ENCODE measurements at regions of chr17 and their contacts with region 1.

Region 1: DNA sequence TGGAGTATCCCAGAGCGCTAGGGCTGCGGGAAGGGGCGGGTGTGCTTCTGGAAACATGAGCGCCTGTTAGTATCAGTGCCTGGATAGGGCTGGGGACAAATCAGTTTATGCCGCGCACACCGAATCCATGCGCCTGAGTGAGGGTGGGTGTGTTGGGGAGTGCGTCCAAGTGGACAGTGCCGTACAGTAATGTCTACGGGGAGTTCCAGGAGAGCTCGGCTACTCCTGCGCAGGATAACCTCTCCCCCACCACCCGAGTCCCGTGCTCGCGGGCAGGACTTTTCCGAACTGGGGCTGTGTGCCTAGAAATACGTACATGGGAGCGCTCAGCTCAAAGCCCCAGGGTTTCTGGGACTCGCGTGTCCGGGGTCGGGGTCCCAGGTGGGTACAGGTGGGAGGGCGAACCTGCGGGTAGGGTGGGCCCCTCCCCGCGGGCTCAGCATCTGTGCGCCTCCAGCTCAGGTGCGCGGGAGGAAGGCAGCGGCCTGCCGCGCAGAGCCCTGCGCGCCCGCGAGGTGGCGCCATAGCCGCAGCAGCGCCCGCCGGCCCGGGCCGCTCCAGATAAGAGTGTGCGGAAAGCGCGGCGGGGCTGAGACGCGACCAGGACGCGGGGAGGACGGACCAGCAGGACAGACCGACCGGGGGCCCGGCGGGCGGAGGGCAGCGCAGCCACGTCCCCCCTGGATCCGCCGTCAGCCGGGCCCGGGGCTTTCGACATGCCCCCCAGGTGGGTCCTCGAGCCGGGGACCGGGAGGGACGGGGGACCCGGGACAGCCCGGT is at the start of gene HIC1:
- DNase-seq: peak; percentile 48 to 90 (median 76)
- ATAC-seq: peak; percentile 54
- H3K4me3 ChIP-seq: peak within 1 kb of the TSS; percentile 54
- H3K4me3 Mint-ChIP-seq: peak within 1 kb of the TSS; percentile 87
- H3K27ac ChIP-seq: peak within 1 kb of the TSS; percentile 48 to 64
- H3K27ac Mint-ChIP-seq: peak within 1 kb of the TSS; percentile 83
- H3K4me1 ChIP-seq: peaks cover 74% of the 10 kb centered on the region
- H3K4me1 Mint-ChIP-seq: peaks cover 36% of the 10 kb centered on the region
- H3K27me3 ChIP-seq: peaks cover 3 to 6% of the 10 kb centered on the region in 2 experiments
- H3K27me3 Mint-ChIP-seq: peaks cover 14% of the 10 kb centered on the region
- CTCF ChIP-seq: peak; percentile 88
- total RNA-seq, gene HIC1: 2.4 to 3.0 TPM

Region 2: DNA sequence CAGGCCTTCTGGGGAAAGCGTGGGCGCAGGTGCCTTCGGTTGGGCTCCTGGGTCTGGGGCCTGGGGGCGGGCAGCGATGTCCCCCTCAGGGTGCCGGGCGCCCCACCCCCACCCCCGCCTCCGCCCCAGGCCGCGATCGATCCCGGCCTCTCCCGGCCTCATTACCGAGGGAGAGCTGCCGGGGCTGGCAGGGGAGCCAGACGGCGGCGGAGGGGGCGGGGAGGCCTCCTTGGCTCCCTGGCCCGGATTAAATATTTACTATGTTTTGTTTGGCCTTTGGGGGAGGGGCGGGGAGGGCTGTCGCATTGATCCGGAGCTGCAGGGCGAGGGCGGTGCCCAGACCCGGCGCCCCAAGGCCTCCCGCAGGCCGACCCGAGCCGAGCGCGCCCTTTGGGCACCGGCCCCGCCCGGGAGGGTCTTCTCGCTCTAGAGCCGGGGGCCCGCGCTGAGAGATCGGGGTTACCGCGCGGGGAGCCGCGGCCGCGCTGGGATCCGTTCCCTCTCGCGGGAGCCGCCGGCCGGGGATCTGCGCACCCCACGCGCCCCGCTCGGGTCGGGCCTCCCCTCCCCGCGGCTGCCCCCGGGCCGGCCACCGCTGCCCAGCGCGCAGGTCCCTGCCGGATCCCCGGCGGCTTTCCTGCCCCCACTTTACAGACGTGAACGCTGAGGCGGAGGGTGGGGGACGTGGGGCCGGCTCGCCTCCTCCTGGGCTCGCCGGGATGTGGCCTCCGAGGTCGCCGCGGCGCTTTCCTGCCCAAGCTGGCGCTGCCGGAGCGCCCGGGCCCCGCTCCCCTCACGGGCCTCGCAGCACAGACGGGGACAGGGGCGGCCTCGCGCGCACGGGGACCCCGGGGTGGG is 56.5 kb before region 1 on chr17:
- CTCF ChIA-PET with region 1: no interaction called
- POLR2A ChIA-PET with region 1: no interaction called
- intact Hi-C with region 1: no loop called
- DNase-seq: peak in 1 of 14 experiments; percentile 5
- ATAC-seq: peak; percentile 24
- H3K4me3 ChIP-seq: no peak overlapping the region
- H3K4me3 Mint-ChIP-seq: no peak overlapping the region
- H3K27ac ChIP-seq: no peak overlapping the region
- H3K27ac Mint-ChIP-seq: no peak overlapping the region
- H3K4me1 ChIP-seq: no peaks in the 10 kb centered on the region
- H3K4me1 Mint-ChIP-seq: no peaks in the 10 kb centered on the region
- H3K27me3 ChIP-seq: peaks cover 20 to 21% of the 10 kb centered on the region in 2 experiments
- H3K27me3 Mint-ChIP-seq: peaks cover 36% of the 10 kb centered on the region
- CTCF ChIP-seq: no peak

Region 3: GRCh38 chr17:2017274-2017941 is 37.3 kb before region 1 on chr17:
- CTCF ChIA-PET with region 1: no interaction called
- POLR2A ChIA-PET with region 1: no interaction called
- intact Hi-C with region 1: no loop called
- DNase-seq: no peak
- ATAC-seq: no peak
- H3K4me3 ChIP-seq: no peak overlapping the region
- H3K4me3 Mint-ChIP-seq: no peak overlapping the region
- H3K27ac ChIP-seq: no peak overlapping the region
- H3K27ac Mint-ChIP-seq: no peak overlapping the region
- H3K4me1 ChIP-seq: peaks cover 4% of the 10 kb centered on the region
- H3K4me1 Mint-ChIP-seq: peaks cover 1% of the 10 kb centered on the region
- H3K27me3 ChIP-seq: peaks cover 2 to 13% of the 10 kb centered on the region in 2 experiments
- H3K27me3 Mint-ChIP-seq: peaks cover 30% of the 10 kb centered on the region
- CTCF ChIP-seq: no peak

Region 4: GRCh38 chr17:2090804-2091534 is 36.3 kb after region 1 on chr17:
- CTCF ChIA-PET with region 1: interaction called, 15 read pairs
- POLR2A ChIA-PET with region 1: interaction called, 11 read pairs
- intact Hi-C with region 1: no loop called
- DNase-seq: no peak
- ATAC-seq: no peak
- H3K4me3 ChIP-seq: no peak overlapping the region
- H3K4me3 Mint-ChIP-seq: peak overlapping the region; percentile 93
- H3K27ac ChIP-seq: peak overlapping the region in 1 of 2 donors; percentile 60
- H3K27ac Mint-ChIP-seq: peak overlapping the region; percentile 81
- H3K4me1 ChIP-seq: peaks cover 51% of the 10 kb centered on the region
- H3K4me1 Mint-ChIP-seq: peaks cover 50% of the 10 kb centered on the region
- H3K27me3 ChIP-seq: no peaks in the 10 kb centered on the region
- H3K27me3 Mint-ChIP-seq: no peaks in the 10 kb centered on the region
- CTCF ChIP-seq: no peak

Region 5: GRCh38 chr17:2215616-2216364 is 161.1 kb after region 1 on chr17:
- CTCF ChIA-PET with region 1: interaction called, 5 read pairs
- POLR2A ChIA-PET with region 1: interaction called, 10 read pairs
- intact Hi-C with region 1: loop called in 1 of 2 experiments (anchors 10 kb)
- DNase-seq: peak; percentile 54 to 88 (median 64)
- ATAC-seq: peak; percentile 93
- H3K4me3 ChIP-seq: peak overlapping the region; percentile 37
- H3K4me3 Mint-ChIP-seq: peak overlapping the region; percentile 68
- H3K27ac ChIP-seq: peak overlapping the region; percentile 81 to 83
- H3K27ac Mint-ChIP-seq: peak overlapping the region; percentile 95
- H3K4me1 ChIP-seq: peaks cover 44% of the 10 kb centered on the region
- H3K4me1 Mint-ChIP-seq: peaks cover 58% of the 10 kb centered on the region
- H3K27me3 ChIP-seq: no peaks in the 10 kb centered on the region
- H3K27me3 Mint-ChIP-seq: no peaks in the 10 kb centered on the region
- CTCF ChIP-seq: no peak

Region 6: GRCh38 chr17:2259769-2260536 is 205.3 kb after region 1 on chr17:
- CTCF ChIA-PET with region 1: interaction called, 6 read pairs
- POLR2A ChIA-PET with region 1: interaction called, 13 read pairs
- intact Hi-C with region 1: loop called (anchors 5 kb)
- DNase-seq: peak; percentile 17 to 84 (median 46)
- ATAC-seq: peak; percentile 55
- H3K4me3 ChIP-seq: peak overlapping the region; percentile 12
- H3K4me3 Mint-ChIP-seq: peak overlapping the region; percentile 85
- H3K27ac ChIP-seq: peak overlapping the region; percentile 63 to 76
- H3K27ac Mint-ChIP-seq: peak overlapping the region; percentile 98
- H3K4me1 ChIP-seq: peaks cover 68% of the 10 kb centered on the region
- H3K4me1 Mint-ChIP-seq: peaks cover 75% of the 10 kb centered on the region
- H3K27me3 ChIP-seq: no peaks in the 10 kb centered on the region
- H3K27me3 Mint-ChIP-seq: no peaks in the 10 kb centered on the region
- CTCF ChIP-seq: no peak

Region 7: GRCh38 chr17:2282297-2282873 is 227.7 kb after region 1 on chr17:
- CTCF ChIA-PET with region 1: interaction called, 14 read pairs
- POLR2A ChIA-PET with region 1: interaction called, 7 read pairs
- intact Hi-C with region 1: loop called (anchors 1 kb)
- DNase-seq: peak in 4 of 14 experiments; percentile 10 to 81 (median 76)
- ATAC-seq: peak; percentile 80
- H3K4me3 ChIP-seq: no peak overlapping the region
- H3K4me3 Mint-ChIP-seq: no peak overlapping the region
- H3K27ac ChIP-seq: no peak overlapping the region
- H3K27ac Mint-ChIP-seq: peak overlapping the region; percentile 58
- H3K4me1 ChIP-seq: peaks cover 14% of the 10 kb centered on the region
- H3K4me1 Mint-ChIP-seq: peaks cover 35% of the 10 kb centered on the region
- H3K27me3 ChIP-seq: no peaks in the 10 kb centered on the region
- H3K27me3 Mint-ChIP-seq: no peaks in the 10 kb centered on the region
- CTCF ChIP-seq: peak; percentile 78

Region 8: DNA sequence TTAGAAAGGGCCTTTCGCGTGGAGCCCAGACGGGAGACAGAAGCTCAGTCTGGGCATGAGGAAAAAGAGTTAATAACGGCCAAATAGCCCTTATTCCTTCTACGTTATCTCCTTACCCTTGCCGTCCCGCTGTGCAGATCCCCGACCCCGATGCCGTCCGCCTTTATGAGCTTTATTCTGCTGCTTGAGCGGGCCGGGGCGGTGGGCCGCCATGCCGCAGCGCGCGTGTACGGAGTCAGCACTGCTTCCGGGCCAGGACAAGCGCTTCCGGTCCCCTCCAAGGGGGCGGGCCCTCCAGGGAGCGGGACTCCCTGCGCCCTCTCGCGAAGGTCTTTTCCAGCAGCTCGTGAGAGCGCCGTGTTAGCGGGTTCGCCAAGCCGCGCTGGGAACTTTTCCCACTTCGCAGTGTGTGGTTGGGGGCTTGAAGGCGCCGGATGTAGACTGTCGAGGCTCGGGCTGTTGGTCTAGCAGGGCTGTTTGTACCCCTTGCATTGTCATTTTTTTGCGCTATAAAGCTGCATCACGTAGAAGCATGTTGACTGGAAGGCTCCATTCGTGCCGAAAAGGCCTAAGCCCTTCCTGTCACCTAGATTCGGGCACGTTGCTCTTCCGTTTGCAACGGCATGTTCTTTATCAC is 281.6 kb after region 1 on chr17 and contains the start of gene TSR1:
- CTCF ChIA-PET with region 1: interaction called, 8 read pairs
- POLR2A ChIA-PET with region 1: interaction called, 9 read pairs
- intact Hi-C with region 1: loop called in 1 of 2 experiments (anchors 5 kb)
- DNase-seq: peak; percentile 79 to 94 (median 86)
- ATAC-seq: peak; percentile 83
- H3K4me3 ChIP-seq: peak within 1 kb of the TSS; percentile 91
- H3K4me3 Mint-ChIP-seq: no peak within 1 kb of the TSS
- H3K27ac ChIP-seq: peak within 1 kb of the TSS; percentile 70 to 78
- H3K27ac Mint-ChIP-seq: peak within 1 kb of the TSS; percentile 94
- H3K4me1 ChIP-seq: peaks cover 30% of the 10 kb centered on the region
- H3K4me1 Mint-ChIP-seq: peaks cover 30% of the 10 kb centered on the region
- H3K27me3 ChIP-seq: no peaks in the 10 kb centered on the region
- H3K27me3 Mint-ChIP-seq: no peaks in the 10 kb centered on the region
- CTCF ChIP-seq: peak; percentile 30
- total RNA-seq, gene TSR1: 29.6 to 31.9 TPM

Region 9: GRCh38 chr17:2401426-2402221 is 346.9 kb after region 1 on chr17:
- CTCF ChIA-PET with region 1: interaction called, 5 read pairs
- POLR2A ChIA-PET with region 1: interaction called, 3 read pairs
- intact Hi-C with region 1: loop called in 1 of 2 experiments (anchors 5 kb)
- DNase-seq: peak; percentile 97 to 99 (median 99)
- ATAC-seq: peak; percentile 58
- H3K4me3 ChIP-seq: peak overlapping the region; percentile 93
- H3K4me3 Mint-ChIP-seq: peak overlapping the region; percentile 100
- H3K27ac ChIP-seq: peak overlapping the region; percentile 93 to 100
- H3K27ac Mint-ChIP-seq: peak overlapping the region; percentile 99
- H3K4me1 ChIP-seq: peaks cover 51% of the 10 kb centered on the region
- H3K4me1 Mint-ChIP-seq: peaks cover 47% of the 10 kb centered on the region
- H3K27me3 ChIP-seq: no peaks in the 10 kb centered on the region
- H3K27me3 Mint-ChIP-seq: no peaks in the 10 kb centered on the region
- CTCF ChIP-seq: no peak

Measured in CD4-positive, alpha-beta T cell (primary cell).